H1 (cell line): ENCODE measurements at regions of chr19 and their contacts with region 1.

Region 1: GRCh38 chr19:53912653-53913052 is 3.6 kb downstream of the CACNG7 start:
- DNase-seq: peak in 1 of 2 experiments; percentile 94
- H3K4me3 ChIP-seq: no peak overlapping the region
- H3K27ac ChIP-seq: no peak overlapping the region
- H3K4me1 ChIP-seq: peaks cover 0 to 8% (median 2%) of the 10 kb centered on the region in 4 experiments; a peak in 4 of 7 replicates
- H3K27me3 ChIP-seq: peaks cover 0 to 10% (median 5%) of the 10 kb centered on the region in 4 experiments; a peak in 5 of 7 replicates
- CTCF ChIP-seq: peak; percentile 87 to 97 (median 95)
- EP300 ChIP-seq: no peak
- POLR2A ChIP-seq: no peak
- RAD21 ChIP-seq: peak; percentile 61 to 70

Region 2: DNA sequence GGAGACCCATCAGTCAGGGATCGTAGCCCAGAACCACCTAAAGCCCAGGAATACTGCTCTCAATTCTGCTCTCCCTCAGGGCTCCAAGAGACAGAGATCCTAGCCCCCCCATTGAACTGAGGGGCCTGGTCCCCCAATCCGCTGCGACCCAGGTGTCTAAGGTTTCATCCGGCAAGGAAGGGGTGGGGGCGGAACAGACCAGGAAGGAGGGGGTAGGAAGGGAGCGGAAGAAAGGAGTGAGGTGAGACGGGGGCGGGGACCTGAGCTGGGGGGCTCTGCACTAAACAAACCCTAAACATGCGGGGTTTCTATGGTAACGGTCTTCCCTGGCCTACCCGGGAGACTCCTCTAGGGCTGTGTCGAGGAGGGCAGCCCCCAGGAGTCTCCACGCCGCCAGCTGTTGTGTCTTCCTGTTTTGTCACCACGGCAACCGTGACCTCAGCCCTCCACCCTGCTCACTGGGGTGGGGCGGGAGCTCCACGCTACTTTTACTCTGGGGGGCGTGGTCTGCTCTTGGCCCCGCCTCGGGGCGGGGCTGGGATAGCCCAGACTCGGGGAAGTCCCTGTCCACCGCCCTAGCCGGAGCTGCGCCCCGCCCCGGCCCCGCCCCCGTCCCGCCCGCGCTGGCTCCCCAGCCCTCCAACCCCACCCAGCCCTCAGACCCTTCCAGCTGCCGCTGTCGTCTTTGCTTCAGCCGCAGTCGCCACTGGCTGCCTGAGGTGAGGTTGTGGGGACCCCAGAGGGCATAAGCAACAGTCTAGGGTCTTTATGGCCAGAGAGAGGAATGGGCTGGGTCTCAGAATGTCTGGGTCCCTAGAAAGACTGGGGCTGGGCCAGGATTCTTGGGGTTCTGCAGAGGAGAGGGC is 45.2 kb before region 1 on chr19 and contains the start of gene MYADM:
- CTCF ChIA-PET with region 1: interaction called, 16 read pairs
- POLR2A ChIA-PET with region 1: interaction called, 7 read pairs
- DNase-seq: peak; percentile 96 to 100
- H3K4me3 ChIP-seq: peak within 1 kb of the TSS; percentile 69 to 94 (median 79)
- H3K27ac ChIP-seq: peak within 1 kb of the TSS; percentile 96
- H3K4me1 ChIP-seq: peaks cover 0 to 13% (median 8%) of the 10 kb centered on the region in 4 experiments; a peak in 6 of 7 replicates
- H3K27me3 ChIP-seq: no peaks in the 10 kb centered on the region
- CTCF ChIP-seq: no peak
- EP300 ChIP-seq: peak; percentile 85 to 99
- POLR2A ChIP-seq: peak in 1 of 2 experiments; percentile 72; a peak in 2 of 3 replicates
- RAD21 ChIP-seq: no peak
- total RNA-seq, gene MYADM: 70.1 and 70.5 TPM in 2 replicates

Region 3: DNA sequence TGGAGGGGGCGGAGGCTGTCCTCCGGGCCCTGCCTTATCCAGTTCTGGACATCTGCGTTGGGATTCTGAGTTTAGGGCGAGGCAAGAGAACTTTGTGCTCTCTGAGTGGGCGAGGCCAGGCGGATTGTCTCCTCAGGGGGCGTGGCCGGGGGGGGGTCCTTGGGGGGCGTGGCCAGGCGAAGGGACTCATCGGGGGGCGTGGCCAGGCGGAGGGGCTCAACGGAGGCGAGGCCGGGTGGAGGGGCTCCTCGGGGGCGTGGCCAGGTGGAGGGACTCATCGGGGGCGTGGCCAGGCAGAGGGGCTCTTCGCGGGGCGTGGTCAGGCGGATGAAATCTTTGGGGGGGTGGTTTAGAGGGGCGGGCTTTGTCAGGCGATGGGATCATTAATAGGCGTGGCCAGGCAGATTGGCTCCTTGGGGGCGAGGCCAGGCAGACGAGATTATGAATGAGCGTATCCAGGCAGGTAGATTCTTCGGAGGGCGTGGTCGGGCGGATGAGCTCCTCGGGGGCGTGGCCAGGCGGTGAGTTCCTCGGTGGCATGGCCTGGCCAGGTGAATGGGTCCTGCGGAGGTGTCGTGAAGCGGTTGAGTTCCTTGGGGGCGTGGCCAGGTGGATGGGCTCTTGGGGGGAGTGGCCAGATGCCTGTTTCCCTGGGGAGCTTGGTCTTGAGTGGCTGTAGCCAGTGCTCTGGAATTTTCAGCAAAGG is 13.9 kb before region 1 on chr19:
- CTCF ChIA-PET with region 1: interaction called, 44 read pairs
- POLR2A ChIA-PET with region 1: interaction called, 10 read pairs
- DNase-seq: peak; percentile 99
- H3K4me3 ChIP-seq: peak overlapping the region; percentile 28 to 68 (median 56); a peak in 7 of 8 replicates
- H3K27ac ChIP-seq: no peak overlapping the region
- H3K4me1 ChIP-seq: peaks cover 0 to 14% (median 9%) of the 10 kb centered on the region in 4 experiments; a peak in 4 of 7 replicates
- H3K27me3 ChIP-seq: peaks cover 0 to 3% (median 0%) of the 10 kb centered on the region in 4 experiments; a peak in 1 of 7 replicates
- CTCF ChIP-seq: no peak
- EP300 ChIP-seq: no peak
- POLR2A ChIP-seq: no peak
- RAD21 ChIP-seq: no peak

Region 4: GRCh38 chr19:53936029-53936428 is 23.4 kb after region 1 on chr19:
- CTCF ChIA-PET with region 1: interaction called, 52 read pairs
- POLR2A ChIA-PET with region 1: interaction called, 14 read pairs
- DNase-seq: no peak
- H3K4me3 ChIP-seq: no peak overlapping the region
- H3K27ac ChIP-seq: no peak overlapping the region
- H3K4me1 ChIP-seq: peaks cover 0 to 4% (median 0%) of the 10 kb centered on the region in 4 experiments; a peak in 1 of 7 replicates
- H3K27me3 ChIP-seq: no peaks in the 10 kb centered on the region
- CTCF ChIP-seq: no peak
- EP300 ChIP-seq: no peak
- POLR2A ChIP-seq: no peak
- RAD21 ChIP-seq: no peak

Region 5: DNA sequence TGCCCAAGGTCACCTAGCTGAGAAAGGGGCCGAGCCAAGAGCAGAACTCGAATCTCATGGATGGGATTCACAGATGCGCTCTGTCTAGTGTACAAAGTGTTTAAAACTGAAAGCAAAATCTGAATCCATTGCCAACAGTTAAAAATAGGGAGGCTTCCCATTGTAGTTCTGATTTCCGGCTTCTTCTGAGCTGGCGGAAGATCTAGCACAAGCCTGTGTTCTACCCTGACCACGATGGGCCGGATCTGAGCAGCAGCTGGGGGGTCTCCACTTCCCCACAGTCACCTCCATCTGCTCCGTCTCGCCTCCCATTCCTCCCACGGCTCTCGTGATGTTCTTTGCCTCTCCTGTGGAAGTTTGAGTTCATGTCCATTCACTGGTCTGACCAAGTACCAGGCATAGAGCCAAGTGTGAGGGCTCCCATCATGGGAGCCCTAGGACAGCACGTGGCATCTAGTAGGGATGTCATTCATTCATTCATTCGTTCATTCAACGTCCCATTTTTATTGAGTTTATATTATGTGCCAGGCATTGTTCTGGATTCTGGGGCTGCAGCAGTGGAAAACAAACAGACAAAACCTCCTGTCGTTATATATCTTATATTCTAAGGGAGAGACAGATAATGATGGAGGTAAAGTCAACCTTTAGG is 52.6 kb after region 1 on chr19:
- CTCF ChIA-PET with region 1: interaction called, 15 read pairs
- POLR2A ChIA-PET with region 1: no interaction called
- DNase-seq: no peak
- H3K4me3 ChIP-seq: no peak overlapping the region
- H3K27ac ChIP-seq: no peak overlapping the region
- H3K4me1 ChIP-seq: peaks cover 0 to 11% (median 3%) of the 10 kb centered on the region in 4 experiments; a peak in 5 of 7 replicates
- H3K27me3 ChIP-seq: peaks cover 0 to 3% (median 1%) of the 10 kb centered on the region in 4 experiments; a peak in 2 of 7 replicates
- CTCF ChIP-seq: no peak
- EP300 ChIP-seq: no peak
- POLR2A ChIP-seq: no peak
- RAD21 ChIP-seq: no peak

Region 6: GRCh38 chr19:54266133-54266532 is 353.5 kb after region 1 on chr19:
- CTCF ChIA-PET with region 1: no interaction called
- POLR2A ChIA-PET with region 1: no interaction called
- DNase-seq: peak; percentile 66 to 99
- H3K4me3 ChIP-seq: no peak overlapping the region
- H3K27ac ChIP-seq: no peak overlapping the region
- H3K4me1 ChIP-seq: peaks cover 0 to 2% (median 0%) of the 10 kb centered on the region in 4 experiments; a peak in 2 of 7 replicates
- H3K27me3 ChIP-seq: no peaks in the 10 kb centered on the region
- CTCF ChIP-seq: peak; percentile 79 to 96 (median 91)
- EP300 ChIP-seq: no peak
- POLR2A ChIP-seq: no peak
- RAD21 ChIP-seq: peak; percentile 62 to 68